ENCODE measurements at regions of chr15 and their contacts with region 1.

Region 1: DNA sequence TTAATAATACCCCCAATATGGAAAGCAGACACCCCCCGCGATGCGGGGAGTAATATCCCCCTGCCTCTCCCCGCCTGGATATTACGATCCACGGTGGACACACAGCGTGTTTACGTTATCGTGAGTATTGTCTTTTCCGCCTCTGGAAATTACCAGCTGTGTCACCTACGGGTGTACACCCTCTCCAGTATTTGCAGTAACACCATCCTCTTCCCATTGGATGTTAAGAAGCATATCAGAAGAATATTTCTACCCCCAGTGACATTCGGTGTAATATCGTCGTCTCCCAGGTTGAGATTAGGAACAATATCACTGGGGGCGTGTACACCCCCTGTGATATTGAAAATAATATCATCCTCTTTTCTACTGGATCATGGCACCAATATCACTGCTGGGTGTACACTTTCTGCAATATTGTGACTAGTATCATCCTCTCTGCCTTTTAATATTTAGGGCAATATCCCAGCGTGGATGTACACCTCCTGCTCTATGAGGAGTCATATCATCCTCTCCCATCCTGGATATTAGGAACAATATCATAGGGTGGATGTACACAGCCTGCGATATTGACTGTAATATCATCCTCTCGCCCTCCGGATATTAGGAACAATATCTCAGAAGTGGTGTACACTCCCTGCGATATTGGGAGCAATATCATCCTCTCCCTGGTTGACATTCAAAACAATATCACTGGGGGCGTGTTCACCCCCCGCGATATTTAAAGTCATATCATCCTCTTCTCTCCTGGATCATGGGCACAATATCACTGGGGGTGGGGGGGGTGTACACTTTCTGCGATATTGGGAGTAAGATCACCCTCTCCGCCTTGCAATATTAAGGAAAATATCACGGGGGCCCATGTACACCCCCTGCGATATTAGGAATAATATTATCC is 20.3 kb upstream of the BMF start:
- DNase-seq: no peak
- ATAC-seq: no peak

Region 2: GRCh38 chr15:39869858-39870515 is 259.0 kb before region 1 on chr15:
- intact Hi-C with region 1: no loop called
- DNase-seq: no peak
- ATAC-seq: peak in 1 of 2 donors; percentile 22

Region 3: DNA sequence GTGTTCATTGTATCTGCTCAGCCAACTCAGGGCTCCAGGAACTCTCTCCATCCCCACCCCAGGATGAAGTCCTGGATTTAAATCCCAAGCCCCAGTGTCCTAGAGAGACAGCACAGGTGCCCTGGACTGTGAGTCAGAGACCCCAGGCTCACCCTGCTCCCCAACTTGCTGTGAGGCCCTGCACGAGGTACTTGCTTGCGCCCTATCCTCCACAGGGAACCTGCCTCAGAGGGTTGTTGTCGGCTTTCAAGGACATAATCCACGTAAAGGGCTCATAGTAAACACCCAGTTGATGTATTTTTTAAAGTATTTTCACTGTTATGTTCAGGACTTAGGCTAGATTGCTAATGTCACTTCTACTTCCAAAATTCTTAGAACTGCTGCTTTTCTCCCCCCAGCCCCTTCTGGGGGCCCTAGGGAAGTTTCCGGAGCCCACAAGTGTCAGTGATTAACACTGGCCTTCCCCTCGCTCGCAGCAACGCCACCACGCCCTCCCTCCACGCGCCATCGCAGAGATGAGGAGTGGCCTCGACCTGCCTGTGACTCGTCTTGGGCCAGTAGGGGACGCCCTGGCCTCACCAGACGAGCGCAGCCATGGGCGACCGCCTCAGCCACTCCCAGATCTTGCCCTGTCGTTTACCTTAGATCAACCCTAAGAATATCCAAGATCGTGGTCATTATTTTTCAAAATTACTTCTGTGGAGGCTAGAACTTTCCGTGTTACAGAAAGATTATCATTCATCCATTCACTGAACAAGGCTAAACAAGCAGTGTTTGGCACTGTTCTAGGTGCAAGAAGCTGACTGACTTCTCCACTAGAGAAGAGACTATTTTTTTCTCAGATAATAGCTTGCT is 84.1 kb before region 1 on chr15:
- intact Hi-C with region 1: no loop called
- DNase-seq: peak; percentile 90
- ATAC-seq: peak; percentile 92 to 97

Region 4: DNA sequence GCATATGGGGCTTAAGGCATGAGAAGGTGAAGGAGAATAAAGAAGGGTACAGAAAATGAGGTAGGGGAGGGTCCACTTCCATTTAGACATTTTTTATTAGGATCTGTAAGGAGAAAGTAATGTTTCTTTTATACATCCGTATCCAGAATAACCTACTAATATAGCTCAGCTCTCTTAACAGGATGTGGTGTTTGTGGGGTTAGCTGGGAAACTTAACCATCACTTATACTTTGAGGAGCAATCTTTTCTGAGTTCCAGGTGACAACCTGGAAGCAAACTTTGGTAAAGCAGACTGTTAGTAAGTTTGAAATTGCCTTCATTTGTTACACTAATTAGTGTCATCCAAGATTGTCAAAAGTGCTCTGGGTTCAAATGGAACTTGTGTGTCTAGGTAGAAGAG is 68.4 kb after region 1 on chr15:
- intact Hi-C with region 1: loop called in 1 of 2 experiments (anchors 5 kb)
- DNase-seq: no peak
- ATAC-seq: no peak

Region 5: DNA sequence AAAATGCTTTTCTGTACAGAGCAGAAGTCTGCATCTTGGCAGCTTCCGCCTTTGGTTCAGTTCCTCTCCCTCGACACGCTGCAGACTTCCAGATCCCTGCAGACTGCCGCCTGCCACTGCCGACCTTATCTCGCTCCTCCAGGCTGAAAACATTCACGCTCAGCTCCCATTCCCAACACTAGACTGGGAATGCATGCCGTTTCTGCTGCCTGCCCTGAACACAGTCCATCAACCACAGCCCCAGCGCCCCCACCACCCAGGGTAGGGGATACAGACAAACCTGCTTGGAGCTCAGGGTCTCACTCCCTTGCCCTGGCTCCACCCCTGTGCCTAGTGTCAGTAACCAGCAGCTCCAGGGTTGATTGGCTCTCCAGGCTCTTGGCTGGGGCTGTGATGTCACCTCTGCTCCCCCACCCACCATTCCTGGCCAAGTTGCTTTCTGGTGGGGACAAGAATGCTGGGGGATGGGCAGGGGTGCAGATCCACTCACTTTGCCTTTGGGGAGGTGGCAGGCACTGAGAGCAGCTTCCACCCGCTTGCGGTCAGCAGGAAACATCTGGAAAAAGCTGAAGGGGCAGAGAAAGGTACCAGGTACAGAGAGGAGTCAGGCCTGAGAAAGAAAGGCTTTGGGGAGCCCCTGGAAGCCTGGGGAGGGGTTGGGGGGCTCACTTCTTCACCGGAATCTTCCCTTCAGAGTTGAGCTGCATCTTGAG is 172.6 kb after region 1 on chr15:
- intact Hi-C with region 1: no loop called
- DNase-seq: no peak
- ATAC-seq: peak; percentile 32 to 65